PC-9 (cell line): ENCODE measurements at regions of chr9 and their contacts with region 1.

Region 1: GRCh38 chr9:83432104-83432639 is 106.0 kb downstream of the FRMD3 start:
- DNase-seq: peak; percentile 95
- H3K4me3 ChIP-seq: no peak overlapping the region
- H3K27ac ChIP-seq: peak overlapping the region; percentile 50
- H3K4me1 ChIP-seq: peaks cover 30% of the 10 kb centered on the region
- H3K27me3 ChIP-seq: no peaks in the 10 kb centered on the region
- CTCF ChIP-seq: no peak

Region 2: DNA sequence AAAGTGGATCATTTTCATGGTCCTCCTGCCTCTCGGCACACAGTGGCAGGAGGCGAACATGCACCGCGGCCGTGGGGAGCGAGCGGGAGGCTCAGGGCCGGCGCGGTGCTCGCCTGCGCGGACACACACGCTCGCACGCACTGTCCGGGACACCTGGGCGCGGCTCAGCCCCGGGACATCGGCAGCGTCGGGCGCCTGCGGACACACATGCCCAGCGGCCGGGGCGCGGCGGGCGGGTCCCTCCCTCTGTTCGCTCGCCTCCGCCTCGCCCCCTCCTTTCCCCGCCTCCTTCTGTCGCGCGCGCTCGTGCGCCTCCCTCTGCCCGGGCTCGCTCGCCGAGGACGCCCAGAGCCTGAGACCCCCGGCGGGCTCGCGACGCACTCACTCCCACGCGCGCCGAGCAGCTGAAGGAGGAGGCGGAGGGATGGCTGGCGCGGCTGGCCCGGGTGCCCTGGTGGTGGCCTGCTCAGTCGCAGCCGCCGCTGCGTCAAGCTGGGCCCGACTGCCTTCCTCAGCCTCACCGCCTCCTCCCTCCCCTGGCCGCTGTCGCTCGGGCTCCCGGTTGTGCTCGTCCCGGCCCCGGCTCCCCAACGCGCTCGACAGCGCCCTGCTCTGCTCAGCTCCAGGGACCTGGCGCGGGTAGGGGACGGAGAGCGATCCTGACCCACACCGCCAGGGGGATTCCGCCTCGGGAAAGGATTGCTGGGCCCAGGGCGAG is 106.2 kb after region 1 on chr9 and contains the start of gene FRMD3:
- CTCF ChIA-PET with region 1: no interaction called
- POLR2A ChIA-PET with region 1: no interaction called
- intact Hi-C with region 1: loop called (anchors 2 kb)
- DNase-seq: peak; percentile 72 to 88
- H3K4me3 ChIP-seq: peak within 1 kb of the TSS; percentile 69
- H3K27ac ChIP-seq: no peak within 1 kb of the TSS
- H3K4me1 ChIP-seq: peaks cover 7% of the 10 kb centered on the region; the same call in 1 of the 2 replicates
- H3K27me3 ChIP-seq: no peaks in the 10 kb centered on the region
- CTCF ChIP-seq: peak; percentile 80
- total RNA-seq, gene FRMD3: 1.4 and 1.9 TPM in 2 replicates

Region 3: GRCh38 chr9:83707768-83708514 is 275.8 kb after region 1 on chr9 and contains the start of gene UBQLN1:
- CTCF ChIA-PET with region 1: no interaction called
- POLR2A ChIA-PET with region 1: no interaction called
- intact Hi-C with region 1: loop called (anchors 5 kb)
- DNase-seq: peak; percentile 73 to 89
- H3K4me3 ChIP-seq: peak within 1 kb of the TSS; percentile 93
- H3K27ac ChIP-seq: peak within 1 kb of the TSS; percentile 95
- H3K4me1 ChIP-seq: peaks cover 15% of the 10 kb centered on the region
- H3K27me3 ChIP-seq: no peaks in the 10 kb centered on the region
- CTCF ChIP-seq: no peak
- total RNA-seq, gene UBQLN1: 118 and 129 TPM in 2 replicates